Calu3 (cell line): ENCODE measurements at regions of chr3 and their contacts with region 1.

Region 1: DNA sequence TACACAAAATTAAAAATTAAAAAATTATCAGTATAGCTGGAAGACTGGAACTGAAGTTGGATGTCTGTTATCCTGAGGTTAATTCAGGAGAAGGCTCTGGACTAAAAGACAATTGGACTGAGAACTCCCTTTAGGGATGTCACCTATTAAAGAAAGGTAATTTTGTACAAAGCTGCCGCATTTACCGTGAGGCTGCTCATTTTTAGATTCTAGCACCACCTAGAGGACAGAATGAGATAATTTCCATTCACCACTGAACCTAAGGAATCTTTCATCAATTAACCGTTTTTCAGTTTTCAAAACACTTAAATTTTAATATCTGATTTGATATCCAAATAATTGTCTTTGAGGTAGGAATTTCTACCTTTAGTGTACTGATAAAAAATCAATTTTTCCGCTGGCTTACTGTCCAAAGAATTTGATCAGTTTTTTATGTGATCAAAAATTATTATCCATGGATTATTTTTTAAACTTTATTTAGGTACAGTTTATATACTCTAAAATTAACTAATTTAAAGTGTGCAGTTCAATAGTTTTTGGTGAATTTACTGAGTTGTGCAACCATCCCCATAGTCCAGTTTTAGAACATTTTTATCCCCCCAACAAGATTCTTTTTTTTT is 106.7 kb upstream of the TNIK start:
- DNase-seq: peak; percentile 21
- H3K4me3 Mint-ChIP-seq: no peak overlapping the region
- H3K27ac Mint-ChIP-seq: no peak overlapping the region
- H3K4me1 Mint-ChIP-seq: no peaks in the 10 kb centered on the region
- H3K27me3 Mint-ChIP-seq: no peaks in the 10 kb centered on the region
- CTCF ChIP-seq: peak; percentile 87

Region 2: GRCh38 chr3:171049861-171050444 is 517.0 kb before region 1 on chr3:
- CTCF ChIA-PET with region 1: interaction called, 6 read pairs
- intact Hi-C with region 1: loop called (anchors 1 kb)
- DNase-seq: peak; percentile 80
- H3K4me3 Mint-ChIP-seq: no peak overlapping the region
- H3K27ac Mint-ChIP-seq: peak overlapping the region; percentile 11
- H3K4me1 Mint-ChIP-seq: peaks cover 28% of the 10 kb centered on the region
- H3K27me3 Mint-ChIP-seq: no peaks in the 10 kb centered on the region
- CTCF ChIP-seq: peak; percentile 90

Region 3: GRCh38 chr3:171351676-171352075 is 215.2 kb before region 1 on chr3:
- CTCF ChIA-PET with region 1: no interaction called
- intact Hi-C with region 1: loop called (anchors 10 kb)
- DNase-seq: no peak
- H3K4me3 Mint-ChIP-seq: no peak overlapping the region
- H3K27ac Mint-ChIP-seq: no peak overlapping the region
- H3K4me1 Mint-ChIP-seq: peaks cover 69% of the 10 kb centered on the region
- H3K27me3 Mint-ChIP-seq: no peaks in the 10 kb centered on the region
- CTCF ChIP-seq: no peak